ENCODE measurements at regions of chr12 and their contacts with region 1.

Region 1: DNA sequence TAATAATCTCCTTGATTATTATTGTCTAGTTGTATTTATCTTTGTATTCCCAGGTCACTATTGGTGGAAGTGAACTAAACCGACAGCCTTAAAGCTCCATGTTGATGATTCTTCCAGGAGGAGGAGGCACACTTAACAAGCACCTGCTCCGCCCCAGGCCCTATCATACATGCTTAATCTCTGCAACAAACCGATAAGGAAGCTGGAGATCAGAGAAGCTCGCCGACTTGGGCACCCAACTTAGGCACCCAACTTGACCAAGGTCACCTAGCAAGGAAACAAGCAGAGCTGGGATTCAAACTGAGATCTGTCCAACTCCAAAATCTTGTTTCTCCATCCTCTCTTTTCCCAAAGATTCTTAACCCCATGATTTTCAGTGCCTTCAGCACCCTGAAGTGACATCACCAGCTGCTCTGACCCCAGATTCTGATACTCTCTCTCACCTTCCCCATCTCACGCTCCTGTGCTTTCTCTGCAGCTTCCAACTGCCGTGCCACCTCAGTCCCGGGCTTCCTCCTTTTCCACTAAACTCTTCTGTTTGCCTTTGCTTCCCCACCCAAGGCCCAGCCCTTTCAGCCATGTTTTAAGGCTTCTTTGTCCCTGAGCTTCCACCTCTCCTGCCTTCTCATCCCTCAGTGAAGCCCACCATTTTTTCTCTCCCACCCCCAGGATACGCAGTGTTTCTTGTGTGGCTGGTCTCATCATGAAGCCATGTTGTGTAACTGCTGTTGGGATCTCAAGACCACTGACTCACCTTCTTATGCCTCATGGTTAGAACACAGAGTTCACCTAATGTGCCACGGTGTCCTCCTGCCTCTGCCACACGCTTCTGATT is 6.6 kb upstream of the KRT18 start:
- DNase-seq: peak; percentile 81 to 91
- H3K4me3 ChIP-seq: no peak overlapping the region
- H3K4me3 Mint-ChIP-seq: peak overlapping the region; percentile 27
- H3K27ac Mint-ChIP-seq: peak overlapping the region; percentile 99
- H3K4me1 ChIP-seq: peaks cover 58% of the 10 kb centered on the region
- H3K4me1 Mint-ChIP-seq: peaks cover 40% of the 10 kb centered on the region
- H3K27me3 ChIP-seq: no peaks in the 10 kb centered on the region
- H3K27me3 Mint-ChIP-seq: no peaks in the 10 kb centered on the region
- CTCF ChIP-seq: no peak

Region 2: GRCh38 chr12:52121824-52122539 is 820.3 kb before region 1 on chr12:
- CTCF ChIA-PET with region 1: no interaction called
- POLR2A ChIA-PET with region 1: no interaction called
- intact Hi-C with region 1: no loop called
- DNase-seq: peak; percentile 74 to 83
- H3K4me3 ChIP-seq: no peak overlapping the region
- H3K4me3 Mint-ChIP-seq: no peak overlapping the region
- H3K27ac Mint-ChIP-seq: no peak overlapping the region
- H3K4me1 ChIP-seq: peaks cover 21% of the 10 kb centered on the region
- H3K4me1 Mint-ChIP-seq: peaks cover 20% of the 10 kb centered on the region
- H3K27me3 ChIP-seq: no peaks in the 10 kb centered on the region
- H3K27me3 Mint-ChIP-seq: no peaks in the 10 kb centered on the region
- CTCF ChIP-seq: peak; percentile 96

Region 3: GRCh38 chr12:52969828-52970569 is 27.7 kb after region 1 on chr12:
- CTCF ChIA-PET with region 1: interaction called, 4 read pairs
- POLR2A ChIA-PET with region 1: interaction called, 42 read pairs
- intact Hi-C with region 1: loop called (anchors 1 kb)
- DNase-seq: peak; percentile 93 to 96
- H3K4me3 ChIP-seq: no peak overlapping the region
- H3K4me3 Mint-ChIP-seq: peak overlapping the region; percentile 69
- H3K27ac Mint-ChIP-seq: peak overlapping the region; percentile 98
- H3K4me1 ChIP-seq: peaks cover 70% of the 10 kb centered on the region
- H3K4me1 Mint-ChIP-seq: peaks cover 55% of the 10 kb centered on the region
- H3K27me3 ChIP-seq: no peaks in the 10 kb centered on the region
- H3K27me3 Mint-ChIP-seq: no peaks in the 10 kb centered on the region
- CTCF ChIP-seq: no peak

Region 4: DNA sequence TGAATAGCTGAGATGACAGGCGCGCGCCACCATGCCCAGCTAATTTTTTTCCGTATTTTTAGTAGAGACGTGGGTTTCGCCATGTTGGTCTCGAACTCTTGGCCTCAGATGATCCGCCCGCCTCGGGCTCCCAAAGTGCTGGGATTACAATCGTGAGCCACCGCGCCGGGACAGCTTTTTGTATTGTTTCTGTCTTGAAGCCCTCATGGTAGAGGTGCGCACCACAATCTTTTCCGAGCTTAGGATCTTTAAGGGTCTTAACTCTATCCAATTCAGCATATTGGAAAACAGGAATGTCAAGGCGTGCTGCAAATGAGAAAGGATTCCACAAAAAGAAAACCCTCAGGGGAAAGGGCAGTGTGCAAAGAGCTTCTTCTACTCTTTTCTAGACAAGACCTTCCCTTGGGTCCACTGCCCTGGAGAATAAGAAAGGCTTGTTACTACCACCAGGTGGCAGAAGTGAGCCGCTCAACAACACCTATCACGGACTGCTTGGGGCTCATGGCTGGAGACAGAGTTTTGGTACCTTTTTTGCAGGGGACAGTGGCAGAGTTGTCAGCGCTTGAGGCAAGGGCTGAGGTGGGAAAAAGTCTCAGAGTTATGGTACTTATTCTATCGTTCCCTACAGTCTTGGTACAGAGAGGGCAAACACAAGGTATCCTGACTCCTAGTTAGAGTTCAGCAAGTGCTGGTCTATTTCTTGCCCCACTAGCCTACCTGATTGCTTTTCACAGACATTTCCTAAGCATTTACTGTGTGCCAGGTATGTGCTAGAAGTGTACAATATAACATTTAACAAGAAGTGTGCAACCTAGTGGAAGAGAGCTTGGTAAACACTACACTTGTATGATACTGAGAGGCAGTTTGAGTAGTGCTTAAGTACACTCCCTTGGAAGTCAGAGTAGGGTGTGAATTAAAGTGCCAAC is 410.3 kb after region 1 on chr12:
- CTCF ChIA-PET with region 1: no interaction called
- POLR2A ChIA-PET with region 1: no interaction called
- intact Hi-C with region 1: no loop called
- DNase-seq: peak; percentile 87 to 88
- H3K4me3 ChIP-seq: no peak overlapping the region
- H3K4me3 Mint-ChIP-seq: no peak overlapping the region
- H3K27ac Mint-ChIP-seq: peak overlapping the region; percentile 52
- H3K4me1 ChIP-seq: peaks cover 5% of the 10 kb centered on the region
- H3K4me1 Mint-ChIP-seq: peaks cover 10% of the 10 kb centered on the region
- H3K27me3 ChIP-seq: no peaks in the 10 kb centered on the region
- H3K27me3 Mint-ChIP-seq: no peaks in the 10 kb centered on the region
- CTCF ChIP-seq: peak; percentile 77 to 78

Measured in Caco-2 (cell line).